ENCODE measurements at regions of chr10 and their contacts with region 1.

Region 1: GRCh38 chr10:99430451-99431189 is at the start of gene GOT1:
- DNase-seq: peak; percentile 91 to 98
- ATAC-seq: peak; percentile 95 to 97 (median 97)
- H3K4me3 ChIP-seq: peak within 1 kb of the TSS; percentile 68 to 96 (median 86)
- H3K27ac ChIP-seq: peak within 1 kb of the TSS; percentile 90 to 99 (median 96)
- H3K4me1 ChIP-seq: peaks cover 0 to 76% (median 36%) of the 10 kb centered on the region in 9 donors
- H3K27me3 ChIP-seq: no peaks in the 10 kb centered on the region
- CTCF ChIP-seq: no peak
- total RNA-seq, gene GOT1: 362 to 669 (median 586) TPM

Region 2: DNA sequence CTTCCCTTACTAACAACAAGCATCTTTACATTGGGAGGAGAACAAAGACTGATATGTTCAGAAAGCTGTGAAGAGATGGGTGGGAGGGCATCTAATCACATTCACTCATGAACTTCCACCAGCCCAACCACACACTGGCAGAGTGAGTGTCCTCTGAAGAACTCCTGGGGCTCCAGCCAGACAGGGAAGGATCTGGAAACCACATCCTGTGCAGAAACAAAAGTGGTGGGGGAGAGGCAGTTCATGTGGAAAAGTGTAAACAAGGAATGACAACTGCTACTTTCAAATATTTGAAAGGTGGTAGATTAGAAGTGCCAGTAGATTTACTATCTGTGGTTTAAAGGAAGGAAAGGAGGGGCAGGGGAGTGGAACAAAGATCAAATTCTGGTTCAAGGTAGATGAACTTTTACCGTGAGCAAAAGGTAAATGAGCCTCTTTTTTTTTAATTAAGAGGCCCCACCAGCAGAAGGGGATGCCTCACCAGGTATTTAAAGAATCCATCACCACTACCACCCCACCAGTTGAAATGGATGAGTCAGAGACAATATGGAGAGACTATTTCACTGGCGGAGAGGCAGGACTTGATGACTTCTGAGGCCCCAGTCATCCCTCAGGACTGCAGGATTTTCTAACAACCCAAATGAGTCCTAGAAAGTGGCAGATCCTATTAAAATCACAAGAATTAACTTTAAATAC is 34.7 kb before region 1 on chr10:
- intact Hi-C with region 1: loop called in 7 of 10 experiments (anchors 2 to 5 kb)
- DNase-seq: no peak
- ATAC-seq: peak in 3 of 8 donors; percentile 47 to 50 (median 48)
- H3K4me3 ChIP-seq: no peak overlapping the region
- H3K27ac ChIP-seq: peak overlapping the region in 1 of 10 donors; percentile 15
- H3K4me1 ChIP-seq: peaks cover 0 to 53% (median 21%) of the 10 kb centered on the region in 9 donors
- H3K27me3 ChIP-seq: no peaks in the 10 kb centered on the region
- CTCF ChIP-seq: no peak

Region 3: DNA sequence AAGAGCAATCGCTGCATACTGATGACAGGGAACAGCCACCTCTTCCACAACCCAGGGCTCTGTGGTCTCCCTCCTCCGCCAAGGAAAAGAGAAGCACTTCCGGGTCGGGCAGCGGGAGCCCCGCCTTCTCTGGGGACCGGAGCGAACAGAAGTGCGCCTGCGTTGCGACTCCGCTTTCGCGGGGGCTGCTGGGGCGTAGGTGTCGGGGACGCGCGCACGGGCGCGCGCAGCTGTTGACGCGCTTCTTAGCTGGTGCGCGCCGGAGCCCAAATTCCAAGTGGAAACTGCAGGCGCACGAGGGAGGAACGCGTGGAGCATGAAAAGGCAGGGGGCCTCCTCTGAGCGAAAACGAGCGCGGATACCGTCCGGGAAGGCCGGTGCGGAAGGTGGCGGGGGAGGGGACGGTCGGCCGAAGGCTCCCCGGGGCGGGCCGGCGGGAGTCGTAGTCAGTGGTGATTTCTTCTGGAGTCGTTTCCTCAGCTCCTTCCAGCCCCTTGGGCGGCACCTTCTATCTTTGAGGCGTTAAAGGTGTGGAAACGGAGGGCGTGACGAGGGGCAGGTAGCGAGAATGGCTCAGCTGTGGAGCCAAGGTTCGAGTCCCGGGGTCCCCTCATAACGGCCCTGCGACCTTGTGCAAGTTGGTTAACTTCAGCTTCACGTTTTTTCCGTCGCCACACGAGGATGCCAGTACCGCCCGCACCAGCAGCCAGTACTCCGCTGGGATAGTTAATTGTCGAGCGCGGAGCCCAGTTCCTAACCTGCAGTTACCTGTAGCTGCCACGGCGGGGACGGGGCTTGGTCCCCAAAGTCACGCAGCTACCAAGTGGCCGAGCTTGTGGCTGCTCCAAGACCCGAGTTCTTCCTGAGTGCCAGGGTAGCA is 301.7 kb after region 1 on chr10 and contains the starts of genes COX15 and CUTC:
- intact Hi-C with region 1: loop called in 2 of 10 experiments (anchors 2 to 10 kb)
- DNase-seq: peak; percentile 97
- ATAC-seq: peak; percentile 97 to 99 (median 99)
- H3K4me3 ChIP-seq: peak within 1 kb of the TSS; percentile 61 to 94 (median 82)
- H3K27ac ChIP-seq: peak within 1 kb of the TSS; percentile 57 to 97 (median 94)
- H3K4me1 ChIP-seq: peaks cover 0 to 41% (median 24%) of the 10 kb centered on the region in 9 donors
- H3K27me3 ChIP-seq: no peaks in the 10 kb centered on the region
- CTCF ChIP-seq: peak in 6 of 9 donors; percentile 6 to 31 (median 18)
- total RNA-seq, gene COX15: 29.6 to 47.2 (median 38.7) TPM
- total RNA-seq, gene CUTC: 29.7 to 43.7 (median 35.1) TPM

Region 4: GRCh38 chr10:100025576-100025975 is 595.0 kb after region 1 on chr10:
- intact Hi-C with region 1: no loop called
- DNase-seq: no peak
- ATAC-seq: no peak
- H3K4me3 ChIP-seq: no peak overlapping the region
- H3K27ac ChIP-seq: no peak overlapping the region
- H3K4me1 ChIP-seq: no peaks in the 10 kb centered on the region
- H3K27me3 ChIP-seq: peaks cover 0 to 6% (median 0%) of the 10 kb centered on the region in 7 donors
- CTCF ChIP-seq: no peak